ENCODE measurements at regions of chr22 and their contacts with region 1.

Region 1: GRCh38 chr22:39514373-39514973 is 5.9 kb upstream of the ATF4 start:
- DNase-seq: peak in 1 of 2 donors; percentile 87
- ATAC-seq: no peak
- H3K4me3 ChIP-seq: no peak overlapping the region
- H3K27ac ChIP-seq: no peak overlapping the region
- H3K4me1 ChIP-seq: no peaks in the 10 kb centered on the region
- H3K27me3 ChIP-seq: no peaks in the 10 kb centered on the region

Region 2: DNA sequence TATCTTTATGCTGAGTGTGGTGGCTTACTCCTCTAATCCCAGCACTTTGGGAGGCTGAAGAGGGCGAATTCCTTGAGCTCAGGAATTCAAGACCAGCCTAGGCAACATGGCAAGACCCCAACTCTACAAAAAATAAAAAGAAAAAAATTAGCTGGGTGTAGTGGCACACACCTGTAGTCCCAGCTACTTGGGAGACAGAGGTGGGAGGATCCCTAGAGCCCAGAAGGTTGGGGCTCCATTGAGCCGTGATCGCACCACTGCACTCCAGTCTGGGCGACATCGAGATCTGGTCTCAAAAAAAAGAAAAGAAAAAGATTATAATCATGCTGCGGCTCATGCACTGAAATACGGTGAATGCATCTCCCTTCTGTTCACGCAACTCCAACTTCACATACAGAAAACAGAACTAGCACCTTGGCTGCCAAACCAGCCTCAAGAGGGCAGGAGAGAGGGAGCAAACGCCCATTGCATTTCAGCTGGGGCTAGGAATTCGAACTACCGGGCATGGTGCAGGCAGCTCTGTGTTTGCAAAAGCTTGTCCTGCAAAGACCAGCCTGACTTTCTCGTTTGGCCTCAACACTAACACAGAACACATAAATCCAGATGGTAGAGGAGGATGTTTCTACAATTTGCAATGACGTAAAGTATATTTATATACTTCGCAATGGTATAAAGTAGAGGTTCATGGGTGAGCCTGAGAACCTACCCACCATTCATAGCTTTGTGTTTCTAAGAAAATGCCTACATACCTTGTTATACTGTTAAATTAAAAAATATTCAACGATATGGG is 171.0 kb before region 1 on chr22:
- intact Hi-C with region 1: loop called in 1 of 2 experiments (anchors 5 kb)
- DNase-seq: peak; percentile 68 to 77
- ATAC-seq: no peak
- H3K4me3 ChIP-seq: no peak overlapping the region
- H3K27ac ChIP-seq: no peak overlapping the region
- H3K4me1 ChIP-seq: no peaks in the 10 kb centered on the region
- H3K27me3 ChIP-seq: no peaks in the 10 kb centered on the region